Activated naive CD4-positive, alpha-beta T cell treated with anti-CD3 and anti-CD28 coated beads for 36 hours (primary cell): ENCODE measurements at regions of chr5 and their contacts with region 1.

Region 1: DNA sequence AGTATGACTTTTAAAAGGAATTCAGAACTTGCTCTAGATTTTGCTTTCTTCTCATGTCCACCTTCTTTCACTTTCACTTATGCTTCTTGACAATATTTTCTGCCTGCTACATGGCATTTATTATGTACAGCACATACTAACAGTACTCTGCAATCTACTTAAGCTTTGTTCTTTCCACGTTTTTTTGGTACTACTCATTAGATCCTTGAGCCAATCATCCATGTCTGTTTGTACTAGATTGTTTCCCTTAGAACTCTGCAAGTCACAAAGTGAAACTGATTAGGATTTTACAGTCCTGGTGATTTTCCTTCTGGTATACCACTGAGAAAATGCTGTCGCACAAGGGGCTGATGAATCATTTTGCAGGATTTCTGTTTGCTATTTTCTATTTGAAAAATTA is 78.3 kb downstream of the PARP8 start:
- DNase-seq: no peak
- H3K4me3 Mint-ChIP-seq: peak overlapping the region; percentile 70
- H3K27ac Mint-ChIP-seq: peak overlapping the region; percentile 69
- H3K4me1 Mint-ChIP-seq: peaks cover 57% of the 10 kb centered on the region
- H3K27me3 Mint-ChIP-seq: no peaks in the 10 kb centered on the region

Region 2: DNA sequence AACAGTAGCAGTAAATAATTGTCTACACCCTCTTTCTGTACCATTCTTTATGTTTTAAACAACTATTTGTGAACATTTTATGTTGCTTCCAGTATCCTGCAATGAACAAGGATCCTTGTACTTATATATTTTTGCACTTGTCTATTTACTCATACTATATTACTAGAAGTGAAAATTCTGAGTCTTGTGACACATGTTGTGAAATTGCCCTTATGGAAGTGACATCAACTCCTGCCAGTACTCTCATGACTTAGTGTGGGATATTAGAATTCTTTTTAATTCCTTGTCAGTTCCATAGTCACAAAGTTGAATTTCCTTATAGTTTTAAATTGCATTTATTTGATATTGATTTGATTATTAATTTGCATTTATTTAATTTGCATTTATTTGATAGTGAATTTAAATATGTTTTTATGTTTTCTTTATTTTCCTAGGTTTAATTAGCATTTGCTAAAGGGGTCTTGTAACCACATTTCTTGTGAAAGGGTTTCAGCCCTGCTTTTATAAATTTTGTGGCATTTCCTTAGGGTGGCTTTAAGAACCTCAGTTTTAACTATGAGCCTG is 50.7 kb before region 1 on chr5:
- CTCF ChIA-PET with region 1: interaction called, 3 read pairs
- intact Hi-C with region 1: loop called (anchors 2 kb)
- DNase-seq: no peak
- H3K4me3 Mint-ChIP-seq: no peak overlapping the region
- H3K27ac Mint-ChIP-seq: no peak overlapping the region
- H3K4me1 Mint-ChIP-seq: peaks cover 43% of the 10 kb centered on the region
- H3K27me3 Mint-ChIP-seq: no peaks in the 10 kb centered on the region

Region 3: DNA sequence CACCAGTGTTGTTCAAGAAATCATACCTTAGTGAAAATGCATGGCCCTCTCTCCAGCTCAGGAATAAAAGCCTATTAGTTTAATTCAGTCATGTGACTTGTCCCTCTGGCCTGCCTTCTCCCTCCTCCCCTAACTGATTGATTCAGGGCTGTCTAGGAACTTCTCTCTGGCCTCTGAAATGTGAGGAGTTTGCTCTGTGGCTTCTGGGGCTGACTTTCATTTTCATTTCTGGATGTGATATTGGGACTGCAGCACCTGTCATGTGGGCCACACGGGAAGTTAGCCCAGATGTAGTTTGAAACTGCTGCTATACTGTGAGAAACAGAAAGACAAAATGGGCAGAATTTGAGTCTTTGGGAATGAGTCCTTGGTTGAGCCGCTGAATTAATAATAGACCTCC is 33.5 kb before region 1 on chr5:
- CTCF ChIA-PET with region 1: interaction called, 4 read pairs
- intact Hi-C with region 1: loop called (anchors 2 kb)
- DNase-seq: peak; percentile 76
- H3K4me3 Mint-ChIP-seq: peak overlapping the region; percentile 71
- H3K27ac Mint-ChIP-seq: peak overlapping the region; percentile 88
- H3K4me1 Mint-ChIP-seq: peaks cover 79% of the 10 kb centered on the region
- H3K27me3 Mint-ChIP-seq: no peaks in the 10 kb centered on the region

Region 4: DNA sequence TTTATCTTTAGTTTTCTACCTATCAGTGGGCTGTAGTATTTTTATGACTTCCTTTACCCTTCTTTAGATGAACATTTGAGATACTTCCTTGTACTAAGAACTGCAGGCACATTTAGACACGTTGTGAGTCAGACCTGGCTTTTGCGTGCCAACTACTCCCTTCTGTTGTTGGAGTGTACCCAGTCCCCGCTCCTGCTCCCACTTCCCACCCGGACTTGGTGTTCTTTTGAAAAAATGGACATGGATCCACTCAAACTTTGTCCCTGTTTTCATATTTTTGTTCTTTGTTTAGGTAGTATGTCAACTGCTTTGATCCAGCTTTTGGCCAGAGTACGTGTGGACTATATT is 17.7 kb before region 1 on chr5:
- CTCF ChIA-PET with region 1: interaction called, 7 read pairs
- intact Hi-C with region 1: loop called (anchors 2 kb)
- DNase-seq: peak; percentile 66
- H3K4me3 Mint-ChIP-seq: peak overlapping the region; percentile 19
- H3K27ac Mint-ChIP-seq: peak overlapping the region; percentile 75
- H3K4me1 Mint-ChIP-seq: peaks cover 63% of the 10 kb centered on the region
- H3K27me3 Mint-ChIP-seq: no peaks in the 10 kb centered on the region

Region 5: DNA sequence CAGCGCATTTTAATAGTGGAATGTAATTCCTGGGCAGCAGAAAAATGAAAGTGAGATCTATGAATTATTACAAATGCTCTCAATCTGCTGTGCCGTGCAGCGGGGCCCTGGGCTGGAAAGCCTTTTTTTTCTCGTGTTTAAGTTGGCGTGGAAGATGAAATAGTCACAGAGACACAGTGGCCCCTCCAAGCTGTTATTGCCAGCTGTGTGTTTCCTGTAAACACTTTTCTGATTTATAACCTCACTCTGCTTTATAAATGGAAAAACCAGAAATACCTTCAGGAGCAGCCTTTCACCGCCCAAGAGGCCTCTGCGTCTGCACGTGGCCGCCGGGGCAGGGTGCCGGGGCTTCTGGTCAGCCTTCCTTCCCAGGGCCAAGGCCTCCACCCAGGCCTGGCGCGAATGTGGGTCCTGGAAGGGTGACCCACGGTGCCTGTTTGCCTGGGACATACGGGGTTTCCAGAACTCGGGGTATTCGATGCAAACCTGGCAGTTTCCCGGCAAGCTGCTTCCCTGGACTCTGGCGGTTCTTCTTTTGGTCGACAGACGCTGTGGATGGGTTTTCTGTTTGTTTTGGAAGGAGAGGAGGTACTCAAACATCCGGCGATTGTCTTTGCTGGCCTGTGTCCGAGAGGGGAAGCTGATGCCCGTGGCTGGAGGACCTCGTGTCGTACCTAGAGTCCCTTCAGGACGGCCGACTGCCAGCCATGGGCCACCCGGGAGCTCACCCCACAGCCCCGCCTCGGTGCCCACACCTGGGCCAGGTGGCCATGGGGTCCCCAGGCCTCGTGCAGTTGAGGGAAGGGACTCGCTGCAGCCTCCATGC is 178.4 kb after region 1 on chr5:
- CTCF ChIA-PET with region 1: no interaction called
- intact Hi-C with region 1: no loop called
- DNase-seq: no peak
- H3K4me3 Mint-ChIP-seq: no peak overlapping the region
- H3K27ac Mint-ChIP-seq: no peak overlapping the region
- H3K4me1 Mint-ChIP-seq: no peaks in the 10 kb centered on the region
- H3K27me3 Mint-ChIP-seq: peaks cover 16% of the 10 kb centered on the region